ENCODE measurements at regions of chr9 and their contacts with region 1.

Region 1: GRCh38 chr9:114653556-114654159 is 3.9 kb downstream of the TEX53 start:
- DNase-seq: peak; percentile 90
- ATAC-seq: peak; percentile 97
- H3K4me3 Mint-ChIP-seq: no peak overlapping the region
- H3K27ac Mint-ChIP-seq: no peak overlapping the region
- H3K4me1 Mint-ChIP-seq: peaks cover 25% of the 10 kb centered on the region
- H3K27me3 Mint-ChIP-seq: no peaks in the 10 kb centered on the region
- CTCF ChIP-seq: peak; percentile 91

Region 2: GRCh38 chr9:114487607-114488300 is 165.9 kb before region 1 on chr9:
- CTCF ChIA-PET with region 1: interaction called, 95 read pairs
- POLR2A ChIA-PET with region 1: interaction called, 3 read pairs
- intact Hi-C with region 1: loop called (anchors 1 kb)
- DNase-seq: peak; percentile 73
- ATAC-seq: peak; percentile 78
- H3K4me3 Mint-ChIP-seq: no peak overlapping the region
- H3K27ac Mint-ChIP-seq: peak overlapping the region; percentile 9
- H3K4me1 Mint-ChIP-seq: peaks cover 27% of the 10 kb centered on the region
- H3K27me3 Mint-ChIP-seq: no peaks in the 10 kb centered on the region
- CTCF ChIP-seq: peak; percentile 87

Region 3: DNA sequence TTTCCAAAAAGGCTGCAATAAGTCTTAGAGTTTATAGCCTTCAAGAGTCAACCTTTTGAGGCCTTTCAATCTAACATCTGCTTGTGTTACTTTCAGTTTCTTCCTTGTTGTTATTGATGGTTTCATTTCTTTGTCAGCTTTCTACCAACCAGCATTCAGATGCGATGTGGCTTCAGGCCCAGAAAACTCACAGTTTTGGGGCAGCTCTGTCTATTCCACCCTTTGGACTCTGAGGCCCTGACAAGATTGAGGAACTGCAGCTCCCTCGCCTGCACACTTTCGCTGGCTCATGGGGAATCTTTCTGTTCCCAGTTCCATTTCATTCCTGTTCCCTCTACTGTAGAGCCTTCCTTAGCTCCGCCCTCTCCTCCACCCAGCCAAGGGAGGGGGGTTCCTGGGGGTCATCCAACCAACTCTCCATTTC is 135.0 kb before region 1 on chr9:
- CTCF ChIA-PET with region 1: interaction called, 11 read pairs
- POLR2A ChIA-PET with region 1: no interaction called
- intact Hi-C with region 1: no loop called
- DNase-seq: no peak
- ATAC-seq: peak; percentile 37
- H3K4me3 Mint-ChIP-seq: no peak overlapping the region
- H3K27ac Mint-ChIP-seq: no peak overlapping the region
- H3K4me1 Mint-ChIP-seq: peaks cover 10% of the 10 kb centered on the region
- H3K27me3 Mint-ChIP-seq: peaks cover 3% of the 10 kb centered on the region
- CTCF ChIP-seq: no peak

Region 4: GRCh38 chr9:114606068-114606467 is 47.6 kb before region 1 on chr9:
- CTCF ChIA-PET with region 1: interaction called, 29 read pairs
- POLR2A ChIA-PET with region 1: no interaction called
- intact Hi-C with region 1: no loop called
- DNase-seq: no peak
- ATAC-seq: no peak
- H3K4me3 Mint-ChIP-seq: no peak overlapping the region
- H3K27ac Mint-ChIP-seq: no peak overlapping the region
- H3K4me1 Mint-ChIP-seq: peaks cover 11% of the 10 kb centered on the region
- H3K27me3 Mint-ChIP-seq: no peaks in the 10 kb centered on the region
- CTCF ChIP-seq: no peak

Region 5: DNA sequence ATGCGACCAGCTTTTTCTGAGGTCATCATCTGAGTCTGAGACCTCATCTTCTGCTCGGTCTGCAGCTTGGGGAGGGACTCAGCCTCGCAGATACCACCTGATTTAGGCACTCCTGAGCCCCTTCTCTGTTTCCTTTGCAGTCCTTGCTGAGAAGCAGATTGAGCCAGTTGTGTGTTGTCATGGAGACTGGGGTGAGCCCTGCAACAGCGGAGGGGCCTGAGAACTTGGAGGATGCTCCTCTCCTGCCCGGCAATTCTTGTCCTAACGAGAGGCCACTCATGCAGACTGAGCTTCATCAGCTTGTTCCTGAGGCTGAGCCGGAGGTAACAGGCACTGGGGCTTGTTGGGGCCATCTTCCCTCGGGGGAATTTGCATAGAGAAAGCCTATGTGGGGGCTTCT is 15.3 kb before region 1 on chr9:
- CTCF ChIA-PET with region 1: interaction called, 26 read pairs
- POLR2A ChIA-PET with region 1: no interaction called
- intact Hi-C with region 1: no loop called
- DNase-seq: no peak
- ATAC-seq: no peak
- H3K4me3 Mint-ChIP-seq: no peak overlapping the region
- H3K27ac Mint-ChIP-seq: no peak overlapping the region
- H3K4me1 Mint-ChIP-seq: peaks cover 6% of the 10 kb centered on the region
- H3K27me3 Mint-ChIP-seq: no peaks in the 10 kb centered on the region
- CTCF ChIP-seq: no peak

Region 6: GRCh38 chr9:114718801-114719221 is 65.2 kb after region 1 on chr9:
- CTCF ChIA-PET with region 1: no interaction called
- POLR2A ChIA-PET with region 1: no interaction called
- intact Hi-C with region 1: no loop called
- DNase-seq: peak; percentile 98
- ATAC-seq: peak; percentile 95
- H3K4me3 Mint-ChIP-seq: peak overlapping the region; percentile 36
- H3K27ac Mint-ChIP-seq: peak overlapping the region; percentile 92
- H3K4me1 Mint-ChIP-seq: peaks cover 56% of the 10 kb centered on the region
- H3K27me3 Mint-ChIP-seq: peaks cover 4% of the 10 kb centered on the region
- CTCF ChIP-seq: no peak